ENCODE measurements at regions of chr21 and their contacts with region 1.

Region 1: DNA sequence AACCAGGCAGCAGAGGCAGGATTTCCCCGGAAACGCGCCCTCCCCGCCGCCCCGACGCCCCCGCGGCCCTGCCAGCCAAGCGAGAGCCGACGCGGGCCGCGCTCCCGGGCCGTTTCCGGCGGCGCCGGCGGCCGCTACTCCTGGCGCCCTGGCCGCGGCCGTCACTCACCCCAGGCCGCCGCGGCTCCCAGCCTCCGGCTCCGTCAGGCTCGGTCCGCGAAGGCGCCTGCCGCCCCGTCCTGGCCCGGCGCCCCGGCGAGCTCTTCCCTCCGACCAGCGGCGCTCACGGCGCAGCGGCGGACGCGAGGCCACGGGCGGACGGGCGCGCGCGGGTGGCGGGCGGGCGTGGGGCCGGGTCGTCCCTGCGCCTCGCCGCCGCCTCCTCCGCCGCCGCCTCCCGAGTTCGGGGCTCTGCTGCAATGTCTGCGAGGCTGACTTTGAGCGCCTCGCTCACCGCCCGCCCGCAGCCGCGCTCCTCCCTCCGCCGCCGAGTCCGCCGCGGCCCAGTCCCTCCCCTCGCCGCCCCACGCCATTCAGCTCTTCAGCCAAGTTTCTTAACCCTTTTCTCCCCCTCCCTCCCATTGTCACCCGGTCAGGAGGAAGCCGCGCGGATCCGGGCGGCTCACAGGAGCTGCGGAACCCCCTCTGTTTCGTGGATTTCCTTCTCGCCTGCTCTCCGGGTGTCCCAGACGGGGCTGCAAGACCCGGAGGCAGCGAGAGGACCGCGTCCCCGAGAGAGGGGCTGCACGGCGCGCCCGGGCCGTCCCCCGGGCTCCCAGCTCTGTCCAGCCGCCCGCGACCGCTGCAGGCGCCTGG is at the start of gene NRIP1:
- DNase-seq: peak; percentile 73 to 92 (median 86)
- H3K4me3 ChIP-seq: peak within 1 kb of the TSS; percentile 62 to 97 (median 89)
- H3K27ac ChIP-seq: peak within 1 kb of the TSS; percentile 71 to 98 (median 94)
- H3K27me3 ChIP-seq: no peaks in the 10 kb centered on the region
- CTCF ChIP-seq: peak in 3 of 56 donors; percentile 14 to 31 (median 15)
- total RNA-seq, gene NRIP1: 24.3 to 54.6 (median 39.1) TPM

Region 2: DNA sequence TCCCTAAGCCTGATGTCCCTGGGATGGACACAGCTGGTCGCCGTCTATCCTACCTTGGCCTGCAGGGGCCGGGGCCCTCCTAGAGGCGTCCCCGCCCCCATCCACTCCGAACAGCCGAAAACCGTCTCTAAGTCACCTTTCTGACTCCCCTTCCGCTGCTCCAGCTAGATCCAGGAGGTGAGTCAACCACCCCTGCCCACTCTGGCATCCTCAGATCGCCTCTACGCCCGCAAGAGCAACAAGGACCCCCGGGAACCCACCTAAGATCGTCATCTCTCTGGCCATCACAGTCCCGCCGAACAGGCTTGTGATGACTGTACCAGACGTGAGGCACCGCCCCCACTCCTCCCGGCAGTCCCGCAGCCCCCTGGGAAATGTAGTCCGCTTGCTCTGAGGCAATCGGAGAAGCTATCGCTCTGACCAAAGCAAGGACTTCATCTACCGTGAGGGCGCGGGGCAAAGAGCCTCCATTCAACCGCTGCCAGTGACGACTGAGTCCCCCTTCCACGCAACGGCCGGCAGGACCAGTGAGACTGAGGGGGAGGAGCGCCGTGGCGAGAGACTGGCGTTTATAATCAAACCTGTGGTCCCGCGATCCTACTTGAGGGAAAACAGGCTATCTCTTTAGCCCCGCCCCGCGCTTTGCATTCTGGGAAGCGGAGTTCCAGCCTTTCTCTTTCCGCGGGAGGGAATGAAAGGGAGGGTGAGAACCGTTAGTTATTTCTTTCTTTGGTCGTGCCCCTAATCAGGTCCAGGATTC is 681.8 kb before region 1 on chr21 and contains the start of gene HSPA13:
- intact Hi-C with region 1: loop called (anchors 5 to 10 kb)
- DNase-seq: peak; percentile 100
- H3K4me3 ChIP-seq: peak within 1 kb of the TSS; percentile 67 to 99 (median 87)
- H3K27ac ChIP-seq: peak within 1 kb of the TSS; percentile 63 to 98 (median 95)
- H3K27me3 ChIP-seq: no peaks in the 10 kb centered on the region
- CTCF ChIP-seq: peak in 29 of 56 donors; percentile 7 to 50 (median 27)
- total RNA-seq, gene HSPA13: 27.8 to 86.2 (median 52.1) TPM

Region 3: DNA sequence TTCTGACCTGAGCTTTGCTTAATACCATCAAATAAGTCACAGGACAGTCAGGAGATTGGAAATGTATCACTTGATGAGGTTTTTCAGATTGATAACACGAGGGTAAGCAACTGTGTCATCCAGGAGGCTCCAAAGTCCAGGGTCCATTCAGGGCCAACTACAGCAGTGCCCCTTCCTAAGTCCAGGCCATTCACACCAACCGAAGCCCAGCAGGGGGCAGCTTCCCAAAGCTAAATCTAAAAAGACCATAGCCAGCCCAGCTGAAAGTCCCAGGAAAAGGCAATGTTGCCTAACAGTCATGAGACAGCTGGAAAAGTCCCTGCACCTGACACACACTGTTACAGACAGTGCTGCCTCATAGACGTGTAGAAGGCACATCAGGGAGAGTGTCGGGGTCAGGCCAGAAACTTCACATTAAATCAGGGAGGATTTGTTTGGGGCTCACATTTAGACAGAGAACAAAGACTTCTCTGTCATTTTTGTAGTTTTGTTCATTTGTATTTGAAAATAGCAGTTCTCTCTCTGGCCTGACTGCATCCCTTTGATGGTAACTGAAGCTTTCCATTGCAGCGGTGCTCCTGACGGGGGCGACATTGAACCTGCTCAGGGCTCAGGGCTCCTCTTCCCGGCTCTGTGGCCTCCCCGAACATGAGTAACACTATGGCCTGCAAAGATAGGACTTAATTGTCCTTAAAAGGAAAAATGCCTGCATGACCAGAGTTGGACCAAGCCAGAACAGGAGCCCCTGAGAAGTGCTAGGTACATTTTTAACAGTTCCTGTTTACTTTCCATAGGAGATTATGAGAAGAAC is 200.4 kb before region 1 on chr21:
- intact Hi-C with region 1: loop called (anchors 2 to 5 kb)
- DNase-seq: peak; percentile 60 to 86 (median 80)
- H3K4me3 ChIP-seq: peak overlapping the region in 4 of 59 donors; percentile 5 to 32 (median 18)
- H3K27ac ChIP-seq: peak overlapping the region in 57 of 59 donors; percentile 20 to 91 (median 76)
- H3K27me3 ChIP-seq: no peaks in the 10 kb centered on the region
- CTCF ChIP-seq: peak in 54 of 56 donors; percentile 37 to 85 (median 68)

Region 4: DNA sequence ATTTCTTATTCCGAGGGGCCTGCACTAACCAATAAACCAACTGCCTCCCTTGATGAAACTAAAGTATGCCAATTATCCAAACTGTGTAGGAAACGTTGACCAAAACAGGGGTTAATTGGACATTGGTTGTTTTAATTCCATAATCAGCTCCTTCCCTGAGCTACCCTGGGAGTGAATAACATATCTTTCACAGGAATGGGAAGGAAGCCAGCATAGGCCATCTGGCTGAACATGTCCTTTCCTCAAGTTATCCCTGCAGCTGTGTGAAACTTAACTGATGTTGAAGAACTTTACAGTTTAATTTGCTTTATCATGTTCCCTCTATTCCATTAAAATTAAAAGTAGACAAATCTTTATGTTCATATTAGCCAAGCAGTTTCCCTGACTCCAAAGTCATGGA is 75.4 kb before region 1 on chr21:
- intact Hi-C with region 1: no loop called
- DNase-seq: peak in 1 of 10 donors; percentile 42
- H3K4me3 ChIP-seq: no peak overlapping the region
- H3K27ac ChIP-seq: no peak overlapping the region
- H3K27me3 ChIP-seq: no peaks in the 10 kb centered on the region
- CTCF ChIP-seq: no peak

Region 5: GRCh38 chr21:15001857-15002606 is 62.8 kb before region 1 on chr21:
- intact Hi-C with region 1: no loop called
- DNase-seq: no peak
- H3K4me3 ChIP-seq: peak overlapping the region in 24 of 59 donors; percentile 0 to 39 (median 16)
- H3K27ac ChIP-seq: no peak overlapping the region
- H3K27me3 ChIP-seq: no peaks in the 10 kb centered on the region
- CTCF ChIP-seq: no peak

Measured in dorsolateral prefrontal cortex (tissue), 120 donors.